CD8-positive, alpha-beta T cell (primary cell): ENCODE measurements at regions of chr19 and their contacts with region 1.

Region 1: GRCh38 chr19:45692187-45693105 is at the start of gene QPCTL:
- DNase-seq: peak; percentile 91 to 99 (median 94)
- ATAC-seq: peak; percentile 85
- H3K4me3 ChIP-seq: peak within 1 kb of the TSS; percentile 74 to 95
- H3K4me3 Mint-ChIP-seq: peak within 1 kb of the TSS; percentile 95
- H3K27ac ChIP-seq: peak within 1 kb of the TSS; percentile 90 to 91
- H3K27ac Mint-ChIP-seq: peak within 1 kb of the TSS; percentile 94
- H3K4me1 ChIP-seq: peaks cover 17% of the 10 kb centered on the region
- H3K4me1 Mint-ChIP-seq: peaks cover 27% of the 10 kb centered on the region
- H3K27me3 ChIP-seq: no peaks in the 10 kb centered on the region
- H3K27me3 Mint-ChIP-seq: no peaks in the 10 kb centered on the region
- CTCF ChIP-seq: no peak
- total RNA-seq, gene QPCTL: 7.0 to 7.5 TPM

Region 2: DNA sequence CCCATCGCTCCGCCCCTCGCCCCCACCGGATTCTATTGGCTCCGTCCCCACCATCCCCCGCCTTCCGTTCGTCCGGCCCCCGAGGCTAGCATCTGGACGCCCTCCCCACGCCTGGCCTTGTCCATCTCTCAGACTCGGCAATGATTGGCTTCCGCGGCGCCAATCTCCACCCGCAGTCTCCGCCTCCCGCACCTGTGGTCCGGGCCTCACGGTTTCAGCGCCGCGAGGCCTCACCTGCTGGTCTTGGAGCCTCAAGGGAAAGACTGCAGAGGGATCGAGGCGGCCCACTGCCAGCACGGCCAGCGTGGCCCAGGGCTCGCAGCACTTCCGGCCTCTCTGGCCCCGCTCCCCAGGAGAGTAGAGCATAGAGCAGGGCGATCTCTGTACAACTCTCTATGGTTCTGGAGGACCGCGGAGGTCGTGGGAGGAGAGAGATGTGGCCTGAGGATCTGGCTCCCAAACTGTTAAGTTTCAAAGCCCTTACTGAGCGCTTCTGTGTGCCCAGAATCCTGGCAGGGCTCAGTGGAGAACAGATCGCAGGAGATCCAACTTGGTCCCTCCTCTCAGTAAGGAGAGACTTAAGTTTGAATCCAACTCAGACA is 268.8 kb before region 1 on chr19 and contains the start of gene ERCC1:
- CTCF ChIA-PET with region 1: no interaction called
- POLR2A ChIA-PET with region 1: no interaction called
- intact Hi-C with region 1: loop called in 1 of 2 experiments (anchors 2 kb)
- DNase-seq: peak in 6 of 9 experiments; percentile 35 to 84 (median 48)
- ATAC-seq: peak; percentile 57
- H3K4me3 ChIP-seq: peak within 1 kb of the TSS; percentile 72 to 95
- H3K4me3 Mint-ChIP-seq: peak within 1 kb of the TSS; percentile 93
- H3K27ac ChIP-seq: peak within 1 kb of the TSS; percentile 48 to 88
- H3K27ac Mint-ChIP-seq: peak within 1 kb of the TSS; percentile 90
- H3K4me1 ChIP-seq: peaks cover 32% of the 10 kb centered on the region
- H3K4me1 Mint-ChIP-seq: peaks cover 55% of the 10 kb centered on the region
- H3K27me3 ChIP-seq: no peaks in the 10 kb centered on the region
- H3K27me3 Mint-ChIP-seq: peaks cover 2% of the 10 kb centered on the region
- CTCF ChIP-seq: no peak
- total RNA-seq, gene ERCC1: 28.7 to 31.5 TPM

Region 3: GRCh38 chr19:45523642-45524256 is 168.7 kb before region 1 on chr19:
- CTCF ChIA-PET with region 1: no interaction called
- POLR2A ChIA-PET with region 1: no interaction called
- intact Hi-C with region 1: loop called (anchors 1 kb)
- DNase-seq: peak; percentile 42 to 90 (median 72)
- ATAC-seq: peak; percentile 99
- H3K4me3 ChIP-seq: no peak overlapping the region
- H3K4me3 Mint-ChIP-seq: no peak overlapping the region
- H3K27ac ChIP-seq: peak overlapping the region in 1 of 2 experiments; percentile 6
- H3K27ac Mint-ChIP-seq: peak overlapping the region; percentile 73
- H3K4me1 ChIP-seq: no peaks in the 10 kb centered on the region
- H3K4me1 Mint-ChIP-seq: peaks cover 11% of the 10 kb centered on the region
- H3K27me3 ChIP-seq: no peaks in the 10 kb centered on the region
- H3K27me3 Mint-ChIP-seq: no peaks in the 10 kb centered on the region
- CTCF ChIP-seq: peak; percentile 75

Region 4: GRCh38 chr19:45670670-45671453 is 21.6 kb before region 1 on chr19:
- CTCF ChIA-PET with region 1: interaction called, 97 read pairs
- POLR2A ChIA-PET with region 1: interaction called, 21 read pairs
- intact Hi-C with region 1: loop called (anchors 2 kb)
- DNase-seq: peak in 8 of 9 experiments; percentile 10 to 73 (median 54)
- ATAC-seq: peak; percentile 37
- H3K4me3 ChIP-seq: no peak overlapping the region
- H3K4me3 Mint-ChIP-seq: no peak overlapping the region
- H3K27ac ChIP-seq: no peak overlapping the region
- H3K27ac Mint-ChIP-seq: no peak overlapping the region
- H3K4me1 ChIP-seq: peaks cover 32% of the 10 kb centered on the region
- H3K4me1 Mint-ChIP-seq: peaks cover 30% of the 10 kb centered on the region
- H3K27me3 ChIP-seq: peaks cover 0 to 4% of the 10 kb centered on the region in 2 experiments
- H3K27me3 Mint-ChIP-seq: no peaks in the 10 kb centered on the region
- CTCF ChIP-seq: no peak

Region 5: GRCh38 chr19:45711851-45712698 is 19.6 kb after region 1 on chr19:
- CTCF ChIA-PET with region 1: interaction called, 50 read pairs
- POLR2A ChIA-PET with region 1: interaction called, 26 read pairs
- intact Hi-C with region 1: loop called (anchors 1 kb)
- DNase-seq: no peak
- ATAC-seq: no peak
- H3K4me3 ChIP-seq: no peak overlapping the region
- H3K4me3 Mint-ChIP-seq: no peak overlapping the region
- H3K27ac ChIP-seq: no peak overlapping the region
- H3K27ac Mint-ChIP-seq: no peak overlapping the region
- H3K4me1 ChIP-seq: peaks cover 15% of the 10 kb centered on the region
- H3K4me1 Mint-ChIP-seq: peaks cover 32% of the 10 kb centered on the region
- H3K27me3 ChIP-seq: no peaks in the 10 kb centered on the region
- H3K27me3 Mint-ChIP-seq: no peaks in the 10 kb centered on the region
- CTCF ChIP-seq: no peak

Region 6: DNA sequence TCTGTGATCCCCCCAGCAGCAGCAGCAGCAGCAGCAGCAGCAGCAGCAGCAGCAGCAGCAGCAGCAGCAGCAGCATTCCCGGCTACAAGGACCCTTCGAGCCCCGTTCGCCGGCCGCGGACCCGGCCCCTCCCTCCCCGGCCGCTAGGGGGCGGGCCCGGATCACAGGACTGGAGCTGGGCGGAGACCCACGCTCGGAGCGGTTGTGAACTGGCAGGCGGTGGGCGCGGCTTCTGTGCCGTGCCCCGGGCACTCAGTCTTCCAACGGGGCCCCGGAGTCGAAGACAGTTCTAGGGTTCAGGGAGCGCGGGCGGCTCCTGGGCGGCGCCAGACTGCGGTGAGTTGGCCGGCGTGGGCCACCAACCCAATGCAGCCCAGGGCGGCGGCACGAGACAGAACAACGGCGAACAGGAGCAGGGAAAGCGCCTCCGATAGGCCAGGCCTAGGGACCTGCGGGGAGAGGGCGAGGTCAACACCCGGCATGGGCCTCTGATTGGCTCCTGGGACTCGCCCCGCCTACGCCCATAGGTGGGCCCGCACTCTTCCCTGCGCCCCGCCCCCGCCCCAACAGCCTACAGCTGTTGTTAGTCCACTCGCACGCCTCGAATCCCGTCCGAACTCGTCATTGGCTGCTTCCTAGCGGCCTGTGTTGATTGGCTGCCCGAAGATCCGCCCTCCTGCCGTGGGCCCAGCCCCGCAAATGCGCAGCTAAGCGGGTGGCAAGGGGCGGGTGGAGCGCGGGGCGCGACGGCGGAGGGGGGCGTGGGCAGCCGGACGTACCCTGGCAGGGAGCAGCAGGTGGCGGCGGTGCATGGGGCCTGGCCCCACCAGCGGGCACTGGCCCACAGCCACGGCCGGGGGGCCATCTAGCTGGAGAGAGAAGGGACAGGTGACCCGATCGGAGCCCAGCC is 78.0 kb after region 1 on chr19:
- CTCF ChIA-PET with region 1: interaction called, 3 read pairs
- POLR2A ChIA-PET with region 1: interaction called, 4 read pairs
- intact Hi-C with region 1: loop called (anchors 1 kb)
- DNase-seq: peak; percentile 79 to 94 (median 92)
- ATAC-seq: peak; percentile 74
- H3K4me3 ChIP-seq: peak overlapping the region; percentile 90 to 99
- H3K4me3 Mint-ChIP-seq: peak overlapping the region; percentile 84
- H3K27ac ChIP-seq: peak overlapping the region in 1 of 2 experiments; percentile 77
- H3K27ac Mint-ChIP-seq: peak overlapping the region; percentile 85
- H3K4me1 ChIP-seq: peaks cover 22% of the 10 kb centered on the region
- H3K4me1 Mint-ChIP-seq: peaks cover 24% of the 10 kb centered on the region
- H3K27me3 ChIP-seq: peaks cover 0 to 6% of the 10 kb centered on the region in 2 experiments
- H3K27me3 Mint-ChIP-seq: peaks cover 7% of the 10 kb centered on the region
- CTCF ChIP-seq: peak; percentile 99

Region 7: DNA sequence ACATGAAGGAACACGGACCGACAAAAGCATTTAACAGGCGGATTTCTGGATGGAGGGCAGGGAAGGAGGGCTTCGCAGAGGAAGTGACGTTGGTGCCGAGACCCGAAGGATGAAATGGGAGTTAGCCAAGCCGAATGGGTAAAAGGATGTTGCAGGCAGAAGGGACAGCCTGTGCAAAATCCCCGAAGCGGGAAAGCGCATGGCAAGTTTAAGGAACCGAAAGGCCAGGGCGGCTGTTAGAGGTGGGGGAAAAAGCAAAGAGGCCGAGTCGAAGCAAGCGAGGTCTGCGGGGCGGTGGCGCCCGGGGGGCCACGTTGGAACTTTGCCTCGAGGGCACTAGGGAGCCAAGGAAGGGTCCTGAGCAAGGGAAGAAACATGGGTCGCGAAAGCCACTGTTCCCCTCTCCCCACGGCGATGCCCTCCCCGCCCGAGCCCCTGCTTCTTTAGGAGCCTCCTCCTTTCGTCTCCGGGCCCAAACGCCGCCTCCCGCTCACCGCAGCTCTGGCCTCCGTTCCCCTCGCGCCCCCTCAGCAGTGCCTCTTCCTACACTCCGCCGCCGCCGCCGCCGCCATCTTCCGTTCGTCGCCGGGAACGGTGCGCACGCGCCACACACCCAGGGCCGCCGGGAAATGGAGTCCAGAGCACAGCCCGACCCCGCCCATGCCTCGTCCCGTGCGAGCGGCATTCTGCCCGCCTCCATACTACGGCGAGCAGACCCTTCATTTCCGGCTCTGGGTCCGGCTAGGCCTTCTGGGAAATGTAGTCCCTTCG is 170.3 kb after region 1 on chr19 and contains the start of gene SYMPK:
- CTCF ChIA-PET with region 1: no interaction called
- POLR2A ChIA-PET with region 1: no interaction called
- intact Hi-C with region 1: loop called in 1 of 2 experiments (anchors 2 kb)
- DNase-seq: peak; percentile 97 to 99 (median 98)
- ATAC-seq: peak; percentile 97
- H3K4me3 ChIP-seq: peak within 1 kb of the TSS; percentile 93 to 99
- H3K4me3 Mint-ChIP-seq: peak within 1 kb of the TSS; percentile 93
- H3K27ac ChIP-seq: peak within 1 kb of the TSS; percentile 82 to 96
- H3K27ac Mint-ChIP-seq: peak within 1 kb of the TSS; percentile 93
- H3K4me1 ChIP-seq: peaks cover 20% of the 10 kb centered on the region
- H3K4me1 Mint-ChIP-seq: peaks cover 32% of the 10 kb centered on the region
- H3K27me3 ChIP-seq: peaks cover 0 to 10% of the 10 kb centered on the region in 2 experiments
- H3K27me3 Mint-ChIP-seq: peaks cover 16% of the 10 kb centered on the region
- CTCF ChIP-seq: no peak
- total RNA-seq, gene SYMPK: 52.6 to 54.2 TPM